BJ (cell line): ENCODE measurements at regions of chr20 and their contacts with region 1.

Region 1: GRCh38 chr20:17569616-17570346 is at the start of gene DSTN:
- DNase-seq: peak; percentile 70
- H3K4me3 ChIP-seq: peak within 1 kb of the TSS; percentile 98
- H3K27me3 ChIP-seq: no peaks in the 10 kb centered on the region
- CTCF ChIP-seq: no peak
- polyA plus RNA-seq, gene DSTN: 295 and 536 TPM in 2 replicates

Region 2: DNA sequence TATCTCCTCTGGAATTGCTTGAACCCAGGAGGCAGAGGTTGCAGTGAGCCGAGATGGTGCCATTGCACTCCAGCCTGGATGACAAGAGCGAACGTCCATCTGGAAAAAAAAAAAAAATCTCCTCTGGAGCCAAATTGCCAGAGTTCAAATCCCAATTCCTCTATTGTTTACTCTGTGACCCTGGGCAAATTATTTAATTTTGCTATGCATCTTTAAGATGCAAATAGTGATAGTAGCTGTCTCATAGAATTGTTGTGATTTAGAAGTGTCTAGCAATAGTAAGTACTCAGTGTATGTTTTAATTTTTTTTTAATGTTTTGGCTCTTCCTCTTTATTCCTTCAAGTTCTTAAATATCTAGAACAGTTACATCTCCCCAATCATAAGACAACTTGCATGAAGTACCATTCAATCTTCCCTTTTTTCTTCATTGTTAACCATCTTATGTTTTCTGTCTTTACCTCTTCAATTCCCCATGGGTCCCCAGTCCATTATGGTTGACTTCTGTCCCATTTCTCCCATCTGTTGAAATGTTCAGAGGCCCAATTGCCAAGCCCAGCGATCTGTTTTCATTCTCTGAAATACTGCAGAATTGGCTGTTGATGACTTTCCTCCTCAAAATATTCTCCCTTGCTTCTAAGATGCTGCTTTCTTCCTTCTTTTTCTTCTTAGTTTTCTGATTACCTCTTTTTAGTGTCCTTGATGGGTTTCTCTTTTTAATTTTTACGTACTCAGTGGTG is 25.9 kb after region 1 on chr20:
- CTCF ChIA-PET with region 1: interaction called, 3 read pairs
- POLR2A ChIA-PET with region 1: interaction called, 11 read pairs
- DNase-seq: no peak
- H3K4me3 ChIP-seq: no peak overlapping the region
- H3K27me3 ChIP-seq: no peaks in the 10 kb centered on the region
- CTCF ChIP-seq: no peak